Left lung (tissue), 14 donors: ENCODE measurements at regions of chr1 and their contacts with region 1.

Region 1: GRCh38 chr1:54944610-54945544 is 35.6 kb upstream of the TMEM61 start:
- DNase-seq: peak; percentile 47 to 78 (median 66)
- ATAC-seq: peak; percentile 93
- H3K4me3 ChIP-seq: no peak overlapping the region
- H3K27ac ChIP-seq: no peak overlapping the region
- H3K4me1 ChIP-seq: peaks cover 0 to 24% of the 10 kb centered on the region in 2 donors
- H3K27me3 ChIP-seq: no peaks in the 10 kb centered on the region
- CTCF ChIP-seq: peak; percentile 67 to 78

Region 2: DNA sequence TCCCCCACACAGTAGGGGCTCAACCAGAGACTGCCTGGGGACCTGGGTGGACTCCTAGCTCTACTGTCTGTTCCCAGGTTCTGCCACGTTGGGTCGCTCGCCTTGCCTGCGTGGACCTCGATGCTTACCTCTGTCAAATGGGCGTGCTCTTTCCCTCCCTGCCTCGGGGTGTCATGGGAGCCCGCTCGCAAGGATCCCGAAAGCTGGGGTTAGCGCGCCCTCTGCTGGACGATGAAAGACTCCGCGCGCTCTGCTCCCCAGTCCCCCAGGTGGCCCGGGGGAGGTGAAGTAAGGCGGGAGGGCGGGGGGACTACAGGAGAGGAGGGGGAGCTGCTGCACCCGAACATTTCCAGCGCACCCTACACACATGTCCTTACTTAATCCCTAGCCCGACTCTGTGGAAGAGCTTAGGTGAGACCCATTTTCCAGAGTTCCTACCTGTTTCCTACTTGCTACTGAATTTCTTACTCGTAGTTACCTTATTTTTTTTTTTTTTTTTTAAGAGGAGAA is 51.5 kb after region 1 on chr1:
- intact Hi-C with region 1: loop called in 1 of 2 experiments (anchors 10 kb)
- DNase-seq: peak; percentile 36 to 95 (median 74)
- ATAC-seq: peak; percentile 96
- H3K4me3 ChIP-seq: peak overlapping the region in 1 of 2 donors; percentile 6
- H3K27ac ChIP-seq: no peak overlapping the region
- H3K4me1 ChIP-seq: peaks cover 0 to 12% of the 10 kb centered on the region in 2 donors
- H3K27me3 ChIP-seq: peaks cover 17 to 61% of the 10 kb centered on the region in 2 donors
- CTCF ChIP-seq: peak; percentile 61 to 81

Region 3: GRCh38 chr1:55007625-55008024 is 62.7 kb after region 1 on chr1:
- intact Hi-C with region 1: no loop called
- DNase-seq: no peak
- ATAC-seq: no peak
- H3K4me3 ChIP-seq: no peak overlapping the region
- H3K27ac ChIP-seq: no peak overlapping the region
- H3K4me1 ChIP-seq: no peaks in the 10 kb centered on the region
- H3K27me3 ChIP-seq: no peaks in the 10 kb centered on the region
- CTCF ChIP-seq: no peak